CD4-positive, alpha-beta T cell (primary cell): ENCODE measurements at regions of chr17 and their contacts with region 1.

Region 1: DNA sequence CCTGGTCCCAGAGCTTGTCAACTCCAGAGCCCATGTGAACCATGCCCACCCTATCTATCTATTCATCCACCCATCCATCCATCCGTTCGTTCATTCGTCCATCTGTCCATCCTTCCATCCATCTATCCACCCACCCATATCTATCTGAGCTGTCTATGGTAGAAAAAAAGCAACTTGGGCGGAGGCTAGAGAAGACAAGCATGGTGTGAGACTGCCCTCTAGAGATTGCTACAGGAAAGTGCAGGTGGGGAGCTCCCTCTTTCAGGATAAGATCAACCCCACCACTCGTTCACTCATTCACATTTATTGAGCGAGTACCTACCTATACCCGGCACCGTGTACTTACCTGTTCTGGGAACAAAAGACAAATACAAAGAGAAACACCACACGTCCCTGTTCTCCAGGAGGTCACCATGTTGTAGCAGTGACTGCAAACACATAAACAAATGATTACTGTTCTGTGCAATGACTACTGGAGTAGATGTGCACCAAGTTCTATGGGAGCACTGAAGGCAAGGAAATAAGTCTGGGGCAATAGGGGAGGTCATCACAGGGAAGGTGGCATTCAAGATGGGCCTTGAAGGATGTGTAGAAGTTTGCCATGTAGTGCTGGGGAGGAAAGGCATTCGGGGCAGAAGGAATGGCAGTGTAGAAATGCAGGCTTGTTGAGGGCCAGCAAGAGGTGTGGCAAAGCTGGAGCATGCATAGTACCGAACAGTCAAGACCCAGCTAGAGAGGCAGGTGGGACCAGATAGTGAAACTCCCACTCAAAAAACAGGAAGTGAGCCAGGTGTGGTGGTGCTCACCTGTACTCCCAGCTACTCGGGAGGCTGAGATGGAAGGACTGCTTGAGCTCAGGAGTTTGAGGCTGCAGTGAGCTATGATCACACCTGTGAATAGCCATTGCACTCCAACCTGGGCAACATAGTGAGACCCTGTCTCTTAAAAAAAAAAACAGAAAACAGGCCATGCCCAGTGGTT is 13.4 kb upstream of the ATP5MC1 start:
- DNase-seq: peak; percentile 21 to 86 (median 44)
- ATAC-seq: peak; percentile 99
- H3K4me3 ChIP-seq: no peak overlapping the region
- H3K4me3 Mint-ChIP-seq: no peak overlapping the region
- H3K27ac ChIP-seq: no peak overlapping the region
- H3K27ac Mint-ChIP-seq: no peak overlapping the region
- H3K4me1 ChIP-seq: peaks cover under 1% of the 10 kb centered on the region
- H3K4me1 Mint-ChIP-seq: no peaks in the 10 kb centered on the region
- H3K27me3 ChIP-seq: peaks cover 2 to 5% of the 10 kb centered on the region in 2 experiments
- H3K27me3 Mint-ChIP-seq: no peaks in the 10 kb centered on the region
- CTCF ChIP-seq: peak; percentile 94

Region 2: GRCh38 chr17:48671697-48672171 is 207.5 kb before region 1 on chr17:
- CTCF ChIA-PET with region 1: interaction called, 12 read pairs
- POLR2A ChIA-PET with region 1: no interaction called
- intact Hi-C with region 1: loop called in 1 of 2 experiments (anchors 1 kb)
- DNase-seq: peak; percentile 59 to 83 (median 65)
- ATAC-seq: peak; percentile 95
- H3K4me3 ChIP-seq: no peak overlapping the region
- H3K4me3 Mint-ChIP-seq: peak overlapping the region; percentile 3
- H3K27ac ChIP-seq: no peak overlapping the region
- H3K27ac Mint-ChIP-seq: no peak overlapping the region
- H3K4me1 ChIP-seq: peaks cover 7% of the 10 kb centered on the region
- H3K4me1 Mint-ChIP-seq: peaks cover 5% of the 10 kb centered on the region
- H3K27me3 ChIP-seq: peaks cover 9 to 13% of the 10 kb centered on the region in 2 experiments
- H3K27me3 Mint-ChIP-seq: peaks cover 73% of the 10 kb centered on the region
- CTCF ChIP-seq: peak; percentile 85

Region 3: GRCh38 chr17:48724251-48725003 is 154.8 kb before region 1 on chr17:
- CTCF ChIA-PET with region 1: interaction called, 19 read pairs
- POLR2A ChIA-PET with region 1: interaction called, 4 read pairs
- intact Hi-C with region 1: loop called (anchors 2 kb)
- DNase-seq: peak; percentile 56 to 84 (median 74)
- ATAC-seq: peak; percentile 76
- H3K4me3 ChIP-seq: peak overlapping the region; percentile 11
- H3K4me3 Mint-ChIP-seq: peak overlapping the region; percentile 63
- H3K27ac ChIP-seq: no peak overlapping the region
- H3K27ac Mint-ChIP-seq: no peak overlapping the region
- H3K4me1 ChIP-seq: peaks cover 70% of the 10 kb centered on the region
- H3K4me1 Mint-ChIP-seq: peaks cover 50% of the 10 kb centered on the region
- H3K27me3 ChIP-seq: peaks cover 99 to 100% of the 10 kb centered on the region in 2 experiments
- H3K27me3 Mint-ChIP-seq: peaks cover 100% of the 10 kb centered on the region
- CTCF ChIP-seq: peak; percentile 71

Region 4: GRCh38 chr17:48816774-48817590 is 62.2 kb before region 1 on chr17 and contains the start of gene TTLL6:
- CTCF ChIA-PET with region 1: interaction called, 115 read pairs
- POLR2A ChIA-PET with region 1: interaction called, 5 read pairs
- intact Hi-C with region 1: loop called (anchors 1 kb)
- DNase-seq: peak; percentile 56 to 91 (median 78)
- ATAC-seq: peak; percentile 98
- H3K4me3 ChIP-seq: peak within 1 kb of the TSS; percentile 50
- H3K4me3 Mint-ChIP-seq: peak within 1 kb of the TSS; percentile 87
- H3K27ac ChIP-seq: no peak within 1 kb of the TSS
- H3K27ac Mint-ChIP-seq: no peak within 1 kb of the TSS
- H3K4me1 ChIP-seq: peaks cover 22% of the 10 kb centered on the region
- H3K4me1 Mint-ChIP-seq: peaks cover 22% of the 10 kb centered on the region
- H3K27me3 ChIP-seq: peaks cover 16 to 32% of the 10 kb centered on the region in 2 experiments
- H3K27me3 Mint-ChIP-seq: peaks cover 71% of the 10 kb centered on the region
- CTCF ChIP-seq: no peak
- total RNA-seq, gene TTLL6: not detected

Region 5: DNA sequence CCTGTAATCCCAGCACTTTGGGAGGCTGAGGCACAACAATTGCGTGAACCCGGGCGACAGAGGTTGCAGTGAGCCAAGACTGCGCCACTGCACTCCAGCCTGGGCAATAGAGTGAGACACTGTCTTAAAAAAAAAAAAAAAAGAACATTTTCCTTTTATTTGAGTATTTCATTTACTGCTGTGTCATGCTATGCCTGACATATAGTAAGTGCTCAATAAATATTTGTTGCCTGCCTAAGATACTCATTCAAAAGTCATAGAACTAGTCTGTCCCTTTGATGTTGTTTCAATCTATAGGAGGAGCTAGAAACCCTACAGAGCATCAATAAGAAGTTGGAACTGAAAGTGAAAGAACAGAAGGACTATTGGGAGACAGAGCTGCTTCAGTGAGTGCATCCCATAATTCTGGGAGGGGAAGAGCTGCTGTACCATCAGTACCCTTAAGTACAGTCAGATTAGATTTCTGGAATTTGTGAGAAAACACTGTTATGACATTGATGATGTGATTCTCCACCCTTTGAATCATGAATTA is 28.4 kb before region 1 on chr17:
- CTCF ChIA-PET with region 1: interaction called, 10 read pairs
- POLR2A ChIA-PET with region 1: no interaction called
- intact Hi-C with region 1: no loop called
- DNase-seq: peak in 2 of 14 experiments; percentile 22 to 48
- ATAC-seq: peak; percentile 32
- H3K4me3 ChIP-seq: no peak overlapping the region
- H3K4me3 Mint-ChIP-seq: no peak overlapping the region
- H3K27ac ChIP-seq: no peak overlapping the region
- H3K27ac Mint-ChIP-seq: no peak overlapping the region
- H3K4me1 ChIP-seq: peaks cover 3% of the 10 kb centered on the region
- H3K4me1 Mint-ChIP-seq: peaks cover 16% of the 10 kb centered on the region
- H3K27me3 ChIP-seq: no peaks in the 10 kb centered on the region
- H3K27me3 Mint-ChIP-seq: no peaks in the 10 kb centered on the region
- CTCF ChIP-seq: no peak

Region 6: GRCh38 chr17:49031965-49032928 is 153.0 kb after region 1 on chr17:
- CTCF ChIA-PET with region 1: no interaction called
- POLR2A ChIA-PET with region 1: no interaction called
- intact Hi-C with region 1: loop called (anchors 2 to 5 kb)
- DNase-seq: peak in 9 of 14 experiments; percentile 6 to 71 (median 23)
- ATAC-seq: peak; percentile 75
- H3K4me3 ChIP-seq: no peak overlapping the region
- H3K4me3 Mint-ChIP-seq: no peak overlapping the region
- H3K27ac ChIP-seq: no peak overlapping the region
- H3K27ac Mint-ChIP-seq: no peak overlapping the region
- H3K4me1 ChIP-seq: no peaks in the 10 kb centered on the region
- H3K4me1 Mint-ChIP-seq: peaks cover 6% of the 10 kb centered on the region
- H3K27me3 ChIP-seq: peaks cover 3 to 6% of the 10 kb centered on the region in 2 experiments
- H3K27me3 Mint-ChIP-seq: peaks cover 18% of the 10 kb centered on the region
- CTCF ChIP-seq: peak; percentile 73